ENCODE measurements at regions of chr3 and their contacts with region 1.

Region 1: GRCh38 chr3:136818769-136819391 is at the start of gene SLC35G2:
- DNase-seq: peak; percentile 84
- H3K4me3 Mint-ChIP-seq: peak within 1 kb of the TSS; percentile 90
- H3K27ac Mint-ChIP-seq: peak within 1 kb of the TSS; percentile 92
- H3K4me1 Mint-ChIP-seq: peaks cover 27% of the 10 kb centered on the region
- H3K27me3 Mint-ChIP-seq: no peaks in the 10 kb centered on the region
- CTCF ChIP-seq: no peak
- total RNA-seq, gene SLC35G2: 31.0 and 31.4 TPM in 2 replicates

Region 2: DNA sequence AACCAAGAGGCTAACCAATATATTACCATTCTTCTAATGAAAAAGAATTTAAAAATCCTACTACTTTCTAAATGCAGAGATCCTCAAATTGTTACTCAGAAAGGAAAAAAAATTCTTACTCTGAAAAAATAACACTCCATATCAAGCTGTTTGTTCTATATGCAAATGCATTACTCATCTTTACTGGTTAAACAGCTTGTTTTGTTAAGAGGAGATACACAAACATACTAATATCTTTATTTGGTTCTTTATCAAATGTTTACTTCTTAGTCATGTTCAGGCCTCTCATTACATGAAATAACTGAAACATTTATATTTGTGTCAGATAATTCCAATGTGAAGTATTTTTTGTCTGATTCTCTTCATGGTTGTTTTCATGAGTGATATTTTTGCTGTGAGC is 422.0 kb before region 1 on chr3:
- CTCF ChIA-PET with region 1: no interaction called
- intact Hi-C with region 1: loop called (anchors 10 kb)
- DNase-seq: no peak
- H3K4me3 Mint-ChIP-seq: no peak overlapping the region
- H3K27ac Mint-ChIP-seq: no peak overlapping the region
- H3K4me1 Mint-ChIP-seq: no peaks in the 10 kb centered on the region
- H3K27me3 Mint-ChIP-seq: no peaks in the 10 kb centered on the region
- CTCF ChIP-seq: no peak

Region 3: DNA sequence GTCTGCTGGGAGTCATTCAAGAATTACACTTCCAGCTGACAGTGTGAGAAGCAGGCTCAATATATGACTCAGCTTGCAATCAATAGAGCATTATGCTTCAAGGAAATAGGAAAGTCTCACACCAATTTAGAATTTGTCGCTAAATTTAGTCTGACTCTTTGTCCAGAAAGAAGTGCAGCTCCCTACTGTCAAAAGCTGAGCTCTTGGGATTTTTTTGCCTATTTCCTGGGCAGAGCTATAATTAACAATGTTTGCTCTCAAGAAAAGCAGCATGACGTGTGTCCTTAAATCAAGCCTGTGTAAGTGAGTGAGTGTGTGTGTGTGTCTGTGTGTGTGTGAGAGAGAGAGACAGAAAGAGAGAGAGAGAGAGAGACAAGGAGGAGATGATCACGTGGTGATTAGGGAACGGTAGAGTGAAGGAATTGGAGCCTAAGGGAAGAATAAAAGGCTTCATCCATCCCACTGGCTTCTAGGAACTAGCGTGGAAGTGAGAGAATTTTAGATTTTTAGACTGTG is 16.3 kb before region 1 on chr3:
- CTCF ChIA-PET with region 1: no interaction called
- intact Hi-C with region 1: loop called (anchors 1 kb)
- DNase-seq: peak; percentile 67
- H3K4me3 Mint-ChIP-seq: peak overlapping the region; percentile 64
- H3K27ac Mint-ChIP-seq: peak overlapping the region; percentile 98
- H3K4me1 Mint-ChIP-seq: peaks cover 36% of the 10 kb centered on the region
- H3K27me3 Mint-ChIP-seq: no peaks in the 10 kb centered on the region
- CTCF ChIP-seq: no peak

Region 4: DNA sequence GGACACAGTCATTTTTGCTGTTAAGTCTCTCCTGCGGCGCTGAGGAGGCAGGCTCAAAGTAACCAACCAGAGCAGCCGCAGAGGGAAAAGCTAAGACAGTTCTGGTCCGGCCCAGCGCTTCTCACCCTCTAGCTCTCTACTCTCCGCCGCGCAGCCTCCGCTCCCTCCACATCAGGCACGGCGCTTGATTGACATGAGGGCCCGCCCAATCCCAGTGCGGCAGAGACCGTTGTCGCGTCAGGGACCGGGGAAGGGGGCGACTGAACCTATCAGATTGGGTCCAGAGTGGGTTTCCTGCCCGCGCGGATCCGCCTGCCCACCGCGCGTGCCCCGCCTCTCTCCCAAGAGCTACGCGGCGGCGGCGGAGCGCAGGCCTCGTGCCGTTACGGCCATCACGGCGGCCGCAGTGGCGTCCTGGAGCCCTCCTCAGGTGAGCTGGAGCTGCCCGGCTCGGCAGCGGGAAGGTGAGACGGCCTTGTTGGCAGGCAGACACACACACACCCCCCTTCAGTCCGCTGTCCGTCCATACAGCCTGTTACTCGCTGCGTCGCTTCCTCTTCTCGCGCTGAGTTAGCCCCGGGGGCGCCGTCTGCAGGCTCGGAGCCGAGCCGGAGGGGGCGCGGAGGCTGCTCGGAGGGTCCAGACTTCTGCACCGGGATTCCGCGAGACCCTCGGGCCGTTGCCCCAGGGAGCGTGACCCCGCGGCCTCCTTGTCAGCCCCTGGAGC is 43.2 kb after region 1 on chr3 and contains the start of gene NCK1:
- CTCF ChIA-PET with region 1: interaction called, 3 read pairs
- intact Hi-C with region 1: loop called (anchors 2 kb)
- DNase-seq: peak; percentile 100
- H3K4me3 Mint-ChIP-seq: peak within 1 kb of the TSS; percentile 99
- H3K27ac Mint-ChIP-seq: peak within 1 kb of the TSS; percentile 89
- H3K4me1 Mint-ChIP-seq: peaks cover 47% of the 10 kb centered on the region
- H3K27me3 Mint-ChIP-seq: no peaks in the 10 kb centered on the region
- CTCF ChIP-seq: no peak
- total RNA-seq, gene NCK1: 108 and 127 TPM in 2 replicates

Region 5: DNA sequence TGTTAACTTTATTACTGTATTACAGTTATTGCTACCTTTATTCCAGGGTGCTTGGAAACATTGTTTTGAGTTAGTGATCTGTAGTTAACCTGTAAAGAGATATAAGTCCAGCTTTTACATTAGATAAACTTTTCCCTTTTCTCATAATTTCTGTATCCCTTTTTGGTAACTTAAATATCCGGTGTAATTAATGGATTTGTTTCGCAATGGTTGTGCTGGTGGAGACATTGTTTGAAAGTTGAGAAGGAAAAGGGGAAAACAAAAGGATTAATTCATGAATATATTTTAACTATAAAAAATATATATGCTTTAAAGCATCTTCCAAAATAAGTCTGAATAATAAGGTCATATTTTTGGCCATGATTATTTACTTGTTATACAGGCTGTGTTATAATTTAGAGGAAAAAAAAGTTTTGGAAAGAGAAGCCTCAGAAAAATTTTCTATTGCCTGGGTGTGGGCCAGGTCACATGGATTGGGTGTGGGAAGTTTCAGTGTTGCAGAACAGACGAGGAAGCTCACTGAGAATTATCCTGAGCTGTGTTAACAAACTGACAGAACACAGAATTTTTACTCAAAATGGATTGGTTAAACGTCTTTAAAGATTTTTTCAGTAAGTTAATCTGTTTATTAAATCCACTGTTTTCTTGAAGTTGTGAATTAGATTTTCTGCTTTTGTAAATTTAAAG is 111.2 kb after region 1 on chr3:
- CTCF ChIA-PET with region 1: no interaction called
- intact Hi-C with region 1: loop called (anchors 5 kb)
- DNase-seq: peak; percentile 62
- H3K4me3 Mint-ChIP-seq: peak overlapping the region; percentile 62
- H3K27ac Mint-ChIP-seq: peak overlapping the region; percentile 78
- H3K4me1 Mint-ChIP-seq: peaks cover 59% of the 10 kb centered on the region
- H3K27me3 Mint-ChIP-seq: no peaks in the 10 kb centered on the region
- CTCF ChIP-seq: no peak

Region 6: DNA sequence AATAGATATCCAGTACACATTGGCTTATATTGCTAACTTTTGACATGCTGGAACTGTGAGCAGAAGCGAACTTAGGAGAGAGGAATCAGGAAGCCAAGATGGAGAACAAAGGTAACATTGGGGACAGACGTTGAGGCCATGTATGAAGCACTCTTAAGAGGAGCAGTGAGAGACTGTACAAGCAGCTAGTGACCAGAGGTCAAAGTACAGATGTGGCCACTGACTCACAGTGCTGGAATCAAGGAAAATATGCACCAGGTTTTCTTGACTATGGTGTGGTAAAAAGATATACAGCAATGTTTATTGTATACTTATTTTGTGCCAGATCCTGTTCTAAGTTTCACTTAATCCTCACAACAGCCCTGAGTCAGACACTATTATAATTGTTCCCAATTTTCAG is 136.9 kb after region 1 on chr3:
- CTCF ChIA-PET with region 1: no interaction called
- intact Hi-C with region 1: loop called (anchors 5 kb)
- DNase-seq: peak; percentile 79
- H3K4me3 Mint-ChIP-seq: peak overlapping the region; percentile 47
- H3K27ac Mint-ChIP-seq: peak overlapping the region; percentile 89
- H3K4me1 Mint-ChIP-seq: peaks cover 89% of the 10 kb centered on the region
- H3K27me3 Mint-ChIP-seq: no peaks in the 10 kb centered on the region
- CTCF ChIP-seq: no peak

Region 7: DNA sequence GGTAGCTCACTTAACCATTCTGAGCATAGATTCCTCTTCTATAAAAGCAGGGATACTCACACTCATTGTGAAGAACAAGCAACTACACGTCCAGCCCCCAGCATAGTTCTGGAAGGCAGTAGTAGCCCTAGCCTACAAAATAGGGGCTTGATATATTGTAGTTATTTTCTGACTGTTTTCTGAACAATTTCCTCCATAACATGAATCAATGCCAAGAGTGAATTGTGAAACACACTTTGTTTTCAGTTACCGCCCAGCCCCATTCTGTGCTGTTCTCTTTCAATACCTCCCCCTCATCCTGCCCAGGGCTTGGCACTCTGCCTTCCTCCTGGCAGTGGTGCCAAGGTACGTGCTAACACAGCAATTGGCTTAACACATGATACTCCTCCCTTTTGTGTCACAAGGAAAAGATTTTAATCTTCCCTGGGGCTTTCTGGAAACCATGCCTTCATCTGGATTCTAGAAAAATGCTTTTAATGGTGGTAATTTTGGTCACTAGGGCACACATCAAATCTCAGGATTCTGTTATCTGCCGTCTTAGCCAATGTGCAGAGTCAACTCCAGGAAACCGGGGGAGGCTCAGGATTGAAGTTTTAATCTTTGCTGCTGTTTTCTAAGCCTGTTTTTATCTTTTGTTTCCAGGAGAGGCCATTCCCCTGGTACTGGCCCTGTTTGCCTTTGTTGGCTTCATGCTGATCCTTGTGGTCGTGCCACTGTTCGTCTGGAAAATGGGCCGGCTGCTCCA is 176.1 kb after region 1 on chr3:
- CTCF ChIA-PET with region 1: no interaction called
- intact Hi-C with region 1: loop called (anchors 5 kb)
- DNase-seq: peak; percentile 93
- H3K4me3 Mint-ChIP-seq: no peak overlapping the region
- H3K27ac Mint-ChIP-seq: peak overlapping the region; percentile 63
- H3K4me1 Mint-ChIP-seq: peaks cover 21% of the 10 kb centered on the region
- H3K27me3 Mint-ChIP-seq: no peaks in the 10 kb centered on the region
- CTCF ChIP-seq: no peak

Measured in Calu3 (cell line).